Left ventricle myocardium superior (tissue), 1 donor: ENCODE measurements at regions of chr6 and their contacts with region 1.

Region 1: GRCh38 chr6:7615611-7616383 is 25.8 kb downstream of the SNRNP48 start:
- DNase-seq: no peak
- ATAC-seq: peak; percentile 62

Region 2: GRCh38 chr6:7295916-7296315 is 319.9 kb before region 1 on chr6:
- intact Hi-C with region 1: loop called (anchors 5 kb)
- DNase-seq: no peak
- ATAC-seq: no peak

Region 3: DNA sequence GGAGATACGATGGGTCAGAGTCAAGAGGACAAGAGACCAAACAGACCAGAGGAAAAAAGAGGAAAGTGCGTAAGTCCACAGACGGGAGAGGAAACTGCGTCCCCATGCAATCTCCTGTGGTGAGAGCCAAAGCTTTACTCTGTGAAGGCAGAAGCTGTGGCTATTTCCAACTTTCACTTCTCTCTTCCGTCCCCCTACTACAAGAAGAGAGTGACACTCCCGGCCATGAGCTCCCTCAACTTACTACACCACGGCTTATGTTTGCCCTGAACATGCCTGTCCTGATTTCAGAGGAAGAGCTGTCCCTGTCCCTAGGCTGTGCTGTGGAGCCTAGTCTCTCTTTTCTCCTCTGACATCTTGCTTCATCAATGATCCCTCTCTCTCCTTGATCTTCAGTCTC is 291.3 kb before region 1 on chr6:
- intact Hi-C with region 1: no loop called
- DNase-seq: no peak
- ATAC-seq: peak; percentile 72

Region 4: GRCh38 chr6:7479801-7480266 is 136.0 kb before region 1 on chr6:
- intact Hi-C with region 1: no loop called
- DNase-seq: no peak
- ATAC-seq: peak; percentile 54

Region 5: DNA sequence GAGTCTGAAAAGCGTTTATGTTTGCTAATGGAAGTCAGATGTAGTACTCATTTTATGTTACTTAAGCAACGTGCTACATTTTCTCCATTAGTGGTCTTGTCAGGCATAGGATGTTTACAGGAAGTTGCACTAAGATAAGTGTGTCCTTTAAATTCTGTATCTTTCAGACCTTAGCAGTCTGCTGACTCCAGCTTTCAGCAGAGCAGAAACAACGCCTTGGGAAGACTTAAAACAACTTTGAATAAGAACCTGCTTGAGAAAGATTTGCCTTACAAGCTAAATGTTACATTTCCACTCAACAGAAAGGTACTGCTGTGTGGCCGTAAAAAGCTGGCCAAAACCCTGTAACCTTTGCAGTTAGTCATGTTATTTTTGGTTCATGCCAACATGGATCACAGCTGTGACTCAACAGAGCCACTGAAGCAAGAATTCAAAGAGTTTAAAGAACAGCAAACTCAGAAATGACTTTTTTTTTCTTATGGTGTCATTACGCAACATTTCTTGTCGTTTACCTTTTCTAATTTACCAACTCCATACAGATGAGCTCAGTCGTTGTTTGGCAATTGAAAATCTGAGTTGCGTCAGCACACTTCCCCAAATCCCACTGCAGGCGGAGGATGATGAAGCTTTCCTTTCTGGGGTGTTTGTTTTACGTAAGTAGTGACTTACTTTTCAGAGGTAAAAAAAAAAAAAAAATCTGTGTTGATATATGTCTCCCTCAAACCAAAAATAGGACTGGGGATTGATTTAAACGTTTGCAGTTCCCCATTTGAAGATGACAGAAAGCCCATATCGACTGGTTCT is 82.2 kb after region 1 on chr6:
- intact Hi-C with region 1: no loop called
- DNase-seq: no peak
- ATAC-seq: peak; percentile 69